ENCODE measurements at regions of chr5 and their contacts with region 1.

Region 1: GRCh38 chr5:76384189-76384588 is 18.9 kb upstream of the IQGAP2 start:
- DNase-seq: no peak
- ATAC-seq: no peak
- H3K4me3 ChIP-seq: no peak overlapping the region
- H3K4me3 Mint-ChIP-seq: peak overlapping the region; percentile 40
- H3K27ac ChIP-seq: no peak overlapping the region
- H3K27ac Mint-ChIP-seq: peak overlapping the region; percentile 19
- H3K4me1 ChIP-seq: peaks cover 29% of the 10 kb centered on the region
- H3K4me1 Mint-ChIP-seq: peaks cover 54% of the 10 kb centered on the region
- H3K27me3 ChIP-seq: no peaks in the 10 kb centered on the region
- H3K27me3 Mint-ChIP-seq: no peaks in the 10 kb centered on the region
- CTCF ChIP-seq: no peak

Region 2: DNA sequence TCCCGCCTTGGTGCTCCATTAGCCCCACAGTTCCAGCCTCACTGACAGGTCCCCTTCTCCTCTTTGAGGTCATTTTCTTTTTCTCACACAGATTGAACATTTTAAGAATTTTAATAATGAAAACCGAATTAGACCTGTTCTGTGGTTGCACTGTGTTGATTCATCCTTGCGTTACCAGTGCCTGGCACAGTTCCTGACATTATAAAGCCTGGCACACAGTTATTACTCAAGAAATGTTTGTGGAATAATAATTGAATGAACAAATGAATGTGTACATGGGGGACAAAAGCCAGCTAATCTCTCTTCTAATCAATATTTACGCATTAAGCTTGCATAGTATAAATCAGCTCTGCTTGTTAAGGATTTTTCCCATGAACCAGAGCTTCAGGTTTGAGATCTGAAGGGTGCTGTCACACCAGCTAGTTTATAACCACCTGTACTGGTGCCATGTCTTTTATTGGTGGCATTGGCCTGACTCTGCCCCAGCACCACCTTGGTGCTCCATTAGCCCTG is 221.0 kb before region 1 on chr5:
- CTCF ChIA-PET with region 1: no interaction called
- POLR2A ChIA-PET with region 1: no interaction called
- intact Hi-C with region 1: no loop called
- DNase-seq: no peak
- ATAC-seq: no peak
- H3K4me3 ChIP-seq: no peak overlapping the region
- H3K4me3 Mint-ChIP-seq: no peak overlapping the region
- H3K27ac ChIP-seq: no peak overlapping the region
- H3K27ac Mint-ChIP-seq: no peak overlapping the region
- H3K4me1 ChIP-seq: no peaks in the 10 kb centered on the region
- H3K4me1 Mint-ChIP-seq: no peaks in the 10 kb centered on the region
- H3K27me3 ChIP-seq: no peaks in the 10 kb centered on the region
- H3K27me3 Mint-ChIP-seq: peaks cover 17% of the 10 kb centered on the region
- CTCF ChIP-seq: no peak

Region 3: GRCh38 chr5:76325876-76326491 is 58.2 kb before region 1 on chr5:
- CTCF ChIA-PET with region 1: no interaction called
- POLR2A ChIA-PET with region 1: interaction called, 4 read pairs
- intact Hi-C with region 1: loop called in 1 of 2 experiments (anchors 5 kb)
- DNase-seq: peak in 11 of 14 experiments; percentile 13 to 88 (median 45)
- ATAC-seq: peak; percentile 87
- H3K4me3 ChIP-seq: no peak overlapping the region
- H3K4me3 Mint-ChIP-seq: peak overlapping the region; percentile 59
- H3K27ac ChIP-seq: peak overlapping the region; percentile 44 to 63
- H3K27ac Mint-ChIP-seq: peak overlapping the region; percentile 87
- H3K4me1 ChIP-seq: peaks cover 59% of the 10 kb centered on the region
- H3K4me1 Mint-ChIP-seq: peaks cover 63% of the 10 kb centered on the region
- H3K27me3 ChIP-seq: no peaks in the 10 kb centered on the region
- H3K27me3 Mint-ChIP-seq: no peaks in the 10 kb centered on the region
- CTCF ChIP-seq: no peak

Region 4: GRCh38 chr5:76594107-76594506 is 209.9 kb after region 1 on chr5:
- CTCF ChIA-PET with region 1: no interaction called
- POLR2A ChIA-PET with region 1: no interaction called
- intact Hi-C with region 1: no loop called
- DNase-seq: no peak
- ATAC-seq: no peak
- H3K4me3 ChIP-seq: no peak overlapping the region
- H3K4me3 Mint-ChIP-seq: no peak overlapping the region
- H3K27ac ChIP-seq: no peak overlapping the region
- H3K27ac Mint-ChIP-seq: no peak overlapping the region
- H3K4me1 ChIP-seq: no peaks in the 10 kb centered on the region
- H3K4me1 Mint-ChIP-seq: no peaks in the 10 kb centered on the region
- H3K27me3 ChIP-seq: no peaks in the 10 kb centered on the region
- H3K27me3 Mint-ChIP-seq: no peaks in the 10 kb centered on the region
- CTCF ChIP-seq: no peak

Region 5: DNA sequence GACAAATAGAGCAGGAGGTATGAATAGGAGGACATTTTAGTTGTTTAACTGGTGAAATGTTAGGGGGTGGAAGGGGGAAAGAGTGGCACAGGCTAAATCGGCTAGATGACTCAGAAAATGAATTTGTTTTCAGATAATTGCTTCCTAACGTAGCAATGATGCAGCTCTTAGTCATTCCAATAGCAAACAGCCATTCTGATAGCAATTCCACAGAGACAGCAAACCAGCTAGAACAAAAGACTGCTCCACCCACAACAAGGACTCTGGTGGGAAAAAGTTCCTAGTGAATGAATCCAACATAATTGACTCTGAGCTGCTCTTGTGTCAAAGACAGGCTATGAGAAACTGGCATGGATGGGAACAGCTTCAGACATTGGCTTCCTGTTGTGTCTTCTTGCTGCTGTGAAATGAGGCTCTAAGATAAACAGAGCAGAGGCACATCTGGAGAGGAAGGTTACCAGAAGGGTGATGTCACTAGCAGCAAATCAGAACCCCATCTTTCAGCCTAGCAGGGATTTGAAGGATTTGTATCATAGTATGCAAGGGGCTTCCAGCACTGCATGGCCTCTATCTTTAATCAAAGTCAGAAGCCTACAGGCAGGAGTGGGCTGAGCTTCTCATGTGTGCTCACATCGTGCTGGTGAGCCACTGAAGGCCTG is 406.6 kb after region 1 on chr5:
- CTCF ChIA-PET with region 1: no interaction called
- POLR2A ChIA-PET with region 1: no interaction called
- intact Hi-C with region 1: no loop called
- DNase-seq: peak in 10 of 14 experiments; percentile 5 to 45 (median 11)
- ATAC-seq: peak; percentile 89
- H3K4me3 ChIP-seq: no peak overlapping the region
- H3K4me3 Mint-ChIP-seq: no peak overlapping the region
- H3K27ac ChIP-seq: no peak overlapping the region
- H3K27ac Mint-ChIP-seq: peak overlapping the region; percentile 86
- H3K4me1 ChIP-seq: peaks cover 10% of the 10 kb centered on the region
- H3K4me1 Mint-ChIP-seq: peaks cover 16% of the 10 kb centered on the region
- H3K27me3 ChIP-seq: no peaks in the 10 kb centered on the region
- H3K27me3 Mint-ChIP-seq: no peaks in the 10 kb centered on the region
- CTCF ChIP-seq: no peak

Region 6: GRCh38 chr5:76888733-76889300 is 504.6 kb after region 1 on chr5:
- CTCF ChIA-PET with region 1: no interaction called
- POLR2A ChIA-PET with region 1: no interaction called
- intact Hi-C with region 1: no loop called
- DNase-seq: no peak
- ATAC-seq: no peak
- H3K4me3 ChIP-seq: no peak overlapping the region
- H3K4me3 Mint-ChIP-seq: no peak overlapping the region
- H3K27ac ChIP-seq: no peak overlapping the region
- H3K27ac Mint-ChIP-seq: no peak overlapping the region
- H3K4me1 ChIP-seq: no peaks in the 10 kb centered on the region
- H3K4me1 Mint-ChIP-seq: no peaks in the 10 kb centered on the region
- H3K27me3 ChIP-seq: no peaks in the 10 kb centered on the region
- H3K27me3 Mint-ChIP-seq: no peaks in the 10 kb centered on the region
- CTCF ChIP-seq: no peak

Measured in CD4-positive, alpha-beta T cell (primary cell).